Naive thymus-derived CD8-positive, alpha-beta T cell (primary cell): ENCODE measurements at regions of chr4 and their contacts with region 1.

Region 1: GRCh38 chr4:147683717-147684700 is at the start of gene PRMT9:
- DNase-seq: peak; percentile 78 to 90 (median 86)
- ATAC-seq: peak; percentile 95 to 96
- H3K4me3 Mint-ChIP-seq: peak within 1 kb of the TSS; percentile 90 to 99 (median 96)
- H3K27ac Mint-ChIP-seq: peak within 1 kb of the TSS; percentile 97 to 100 (median 99)
- H3K4me1 Mint-ChIP-seq: peaks cover 19 to 41% (median 36%) of the 10 kb centered on the region in 4 donors
- H3K27me3 Mint-ChIP-seq: peaks cover 0 to 5% (median under 1%) of the 10 kb centered on the region in 5 donors
- polyA plus RNA-seq, gene PRMT9: 4.6 to 5.8 (median 5.4) TPM

Region 2: DNA sequence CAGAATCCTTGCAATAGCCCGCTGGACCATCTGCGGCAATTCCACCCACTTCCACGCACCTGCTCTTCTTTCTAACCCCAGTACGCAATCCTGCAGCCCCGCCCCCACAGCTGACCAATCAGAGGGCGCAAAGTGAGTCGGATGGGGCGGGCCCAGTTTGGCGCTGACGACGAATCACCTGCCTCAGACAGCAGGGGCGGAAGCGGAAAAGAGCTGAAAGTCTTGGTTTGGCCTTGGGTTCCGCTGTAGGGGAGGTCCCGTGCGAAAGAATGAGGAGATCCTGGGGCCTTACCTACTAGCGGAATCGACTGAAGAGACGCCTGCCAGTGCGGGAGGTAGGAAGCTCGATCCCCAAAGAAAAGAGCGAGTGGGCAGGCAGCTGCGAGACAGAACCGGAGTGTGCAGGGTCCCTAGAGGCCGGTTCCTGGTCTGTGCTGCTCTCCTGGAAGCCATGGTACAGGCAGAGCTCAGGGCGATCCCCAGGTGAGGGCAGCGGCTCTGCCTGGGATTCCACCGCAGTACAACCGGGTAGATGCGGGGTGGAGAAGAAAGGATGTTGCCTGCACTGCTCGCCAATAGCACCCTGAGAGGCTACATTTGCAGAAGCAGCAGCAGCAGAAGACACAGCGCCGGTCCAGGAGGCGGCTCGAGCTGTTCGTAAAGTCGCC is 66.7 kb before region 1 on chr4 and contains the start of gene TMEM184C:
- POLR2A ChIA-PET with region 1: interaction called, 54 read pairs
- DNase-seq: peak; percentile 95 to 99 (median 98)
- ATAC-seq: peak; percentile 93 to 96
- H3K4me3 Mint-ChIP-seq: peak within 1 kb of the TSS; percentile 92 to 99 (median 96)
- H3K27ac Mint-ChIP-seq: peak within 1 kb of the TSS; percentile 95 to 99 (median 98)
- H3K4me1 Mint-ChIP-seq: peaks cover 22 to 52% (median 36%) of the 10 kb centered on the region in 4 donors
- H3K27me3 Mint-ChIP-seq: peaks cover 0 to 10% (median 0%) of the 10 kb centered on the region in 5 donors
- polyA plus RNA-seq, gene TMEM184C: 12.6 to 27.9 (median 16.6) TPM

Region 3: DNA sequence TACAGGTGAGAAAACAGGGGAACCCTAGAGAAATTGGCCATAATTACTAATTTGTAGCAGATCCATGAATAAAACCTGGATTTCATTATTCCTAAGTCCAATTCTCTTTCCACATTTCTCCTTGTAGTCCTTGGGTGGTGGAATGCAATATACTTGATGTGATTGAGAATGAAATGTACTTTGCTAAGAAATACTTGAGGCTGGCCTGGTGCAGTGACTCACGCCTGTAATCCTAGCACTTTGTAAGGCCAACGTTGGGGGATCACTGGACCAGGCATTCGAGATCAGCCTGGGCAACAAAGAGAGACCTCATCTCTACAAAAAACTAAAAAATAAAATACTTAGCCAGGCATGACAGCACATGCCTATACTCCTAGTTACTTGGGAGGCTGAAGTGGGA is 50.9 kb before region 1 on chr4:
- POLR2A ChIA-PET with region 1: no interaction called
- DNase-seq: no peak
- ATAC-seq: no peak
- H3K4me3 Mint-ChIP-seq: no peak overlapping the region
- H3K27ac Mint-ChIP-seq: peak overlapping the region in 4 of 10 donors; percentile 13 to 72 (median 54)
- H3K4me1 Mint-ChIP-seq: peaks cover 0 to 4% (median 0%) of the 10 kb centered on the region in 4 donors
- H3K27me3 Mint-ChIP-seq: no peaks in the 10 kb centered on the region